Body of pancreas (tissue), 4 donors: ENCODE measurements at regions of chr10 and their contacts with region 1.

Region 1: GRCh38 chr10:120950051-120950561 is 98.9 kb downstream of the WDR11 start:
- DNase-seq: no peak
- ATAC-seq: no peak
- H3K4me3 ChIP-seq: no peak overlapping the region
- H3K27ac ChIP-seq: no peak overlapping the region
- H3K4me1 ChIP-seq: peaks cover 22% of the 10 kb centered on the region
- H3K27me3 ChIP-seq: no peaks in the 10 kb centered on the region
- CTCF ChIP-seq: no peak
- POLR2A ChIP-seq: no peak

Region 2: GRCh38 chr10:120810298-120810697 is 139.8 kb before region 1 on chr10:
- intact Hi-C with region 1: no loop called
- DNase-seq: no peak
- ATAC-seq: no peak
- H3K4me3 ChIP-seq: no peak overlapping the region
- H3K27ac ChIP-seq: no peak overlapping the region
- H3K4me1 ChIP-seq: no peaks in the 10 kb centered on the region
- H3K27me3 ChIP-seq: no peaks in the 10 kb centered on the region
- CTCF ChIP-seq: no peak
- POLR2A ChIP-seq: no peak

Region 3: DNA sequence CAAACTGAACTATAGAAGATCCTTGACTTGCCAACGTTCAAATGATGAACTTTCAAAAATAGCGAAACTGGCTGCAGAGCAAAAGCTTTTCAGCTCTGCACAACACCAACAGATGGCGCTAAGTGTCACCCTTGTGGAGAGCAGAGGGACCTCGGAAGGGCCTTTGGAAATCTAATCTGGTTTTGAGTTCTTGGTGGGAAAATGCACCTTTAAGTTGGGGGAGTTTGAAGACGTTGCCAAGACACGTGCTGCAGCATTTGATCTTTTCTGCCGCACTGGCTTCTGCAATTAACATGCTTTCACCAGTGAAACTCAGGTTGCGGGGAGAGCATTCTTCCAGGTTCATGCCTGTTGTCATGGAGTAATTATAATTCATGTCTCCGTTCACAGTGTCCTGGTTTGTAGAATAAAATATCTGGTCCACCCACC is 125.2 kb before region 1 on chr10:
- intact Hi-C with region 1: no loop called
- DNase-seq: peak in 2 of 4 donors; percentile 11 to 15
- ATAC-seq: no peak
- H3K4me3 ChIP-seq: no peak overlapping the region
- H3K27ac ChIP-seq: no peak overlapping the region
- H3K4me1 ChIP-seq: no peaks in the 10 kb centered on the region
- H3K27me3 ChIP-seq: peaks cover 0 to 8% of the 10 kb centered on the region in 2 donors
- CTCF ChIP-seq: peak in 3 of 7 experiments; percentile 33 to 39 (median 34)
- POLR2A ChIP-seq: no peak

Region 4: DNA sequence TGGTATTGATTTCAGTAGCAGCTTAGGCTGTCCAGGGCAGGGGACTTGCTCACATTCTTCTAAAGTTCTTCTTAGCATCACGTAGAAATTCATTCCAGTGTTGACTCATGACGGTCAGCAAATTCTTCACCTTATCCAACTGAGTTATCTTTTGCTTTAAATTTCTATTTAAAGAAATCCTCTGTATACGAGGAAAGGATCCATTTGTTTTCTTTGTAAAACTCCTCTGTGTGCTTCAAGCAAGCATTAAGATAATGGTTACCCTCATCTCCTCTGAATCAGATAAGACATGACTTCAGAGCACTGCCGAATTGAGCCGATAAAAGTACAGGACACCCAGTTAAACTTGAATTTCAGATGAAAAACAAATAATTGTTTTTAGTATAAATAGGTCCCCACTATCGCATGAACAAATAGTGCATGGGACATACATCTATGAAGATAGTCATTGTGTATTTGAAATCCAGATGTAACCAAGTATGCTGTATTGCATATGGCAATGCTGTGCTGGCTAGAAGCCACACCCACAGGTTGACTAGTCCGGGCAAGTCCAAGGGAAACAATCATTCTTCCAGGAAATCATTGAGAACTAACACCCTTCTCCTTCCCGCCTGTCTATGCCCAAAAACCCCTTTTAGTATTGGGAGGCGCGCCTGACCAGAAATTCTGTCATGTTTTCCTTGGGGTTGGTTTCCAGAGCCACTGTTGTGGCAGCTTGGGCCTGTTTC is 660.7 kb after region 1 on chr10:
- intact Hi-C with region 1: loop called (anchors 5 kb)
- DNase-seq: no peak
- ATAC-seq: no peak
- H3K4me3 ChIP-seq: no peak overlapping the region
- H3K27ac ChIP-seq: no peak overlapping the region
- H3K4me1 ChIP-seq: peaks cover 8% of the 10 kb centered on the region
- H3K27me3 ChIP-seq: no peaks in the 10 kb centered on the region
- CTCF ChIP-seq: no peak
- POLR2A ChIP-seq: no peak